PC-3 (cell line): ENCODE measurements at regions of chr10 and their contacts with region 1.

Region 1: GRCh38 chr10:109966961-109967738 is 40.6 kb upstream of the ADD3 start:
- DNase-seq: peak; percentile 56
- ATAC-seq: peak; percentile 72
- H3K4me3 ChIP-seq: peak overlapping the region; percentile 61
- H3K27ac ChIP-seq: peak overlapping the region; percentile 86
- H3K4me1 ChIP-seq: peaks cover 36% of the 10 kb centered on the region
- H3K27me3 ChIP-seq: no peaks in the 10 kb centered on the region
- CTCF ChIP-seq: no peak

Region 2: DNA sequence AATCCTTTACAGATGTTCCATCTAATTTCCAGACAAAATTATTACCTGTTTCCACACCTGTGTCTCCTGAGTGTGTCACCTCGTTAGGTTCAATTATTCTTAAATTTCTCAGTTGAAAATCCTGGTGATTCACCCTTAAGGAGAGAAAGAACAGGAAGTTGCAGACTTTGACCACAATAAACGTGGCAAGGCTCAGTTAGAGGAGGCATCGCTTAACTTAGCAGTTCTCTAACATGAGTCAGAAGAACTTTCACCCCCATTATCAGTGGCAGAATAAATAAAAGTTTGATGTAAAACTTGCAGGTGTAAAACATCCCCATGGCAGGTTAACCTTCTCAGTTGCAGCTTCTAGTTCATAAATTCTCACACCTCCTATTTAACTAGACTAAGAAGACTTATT is 52.2 kb before region 1 on chr10:
- CTCF ChIA-PET with region 1: no interaction called
- POLR2A ChIA-PET with region 1: no interaction called
- intact Hi-C with region 1: loop called (anchors 10 kb)
- DNase-seq: peak; percentile 86
- ATAC-seq: peak; percentile 88
- H3K4me3 ChIP-seq: 0 out of 2 replicates have a peak overlapping the region, but pooled peaks have one; percentile 22
- H3K27ac ChIP-seq: peak overlapping the region; percentile 60
- H3K4me1 ChIP-seq: peaks cover 52% of the 10 kb centered on the region
- H3K27me3 ChIP-seq: no peaks in the 10 kb centered on the region
- CTCF ChIP-seq: no peak

Region 3: GRCh38 chr10:110007701-110008517 is 40.8 kb after region 1 on chr10 and contains the start of gene ADD3:
- CTCF ChIA-PET with region 1: no interaction called
- POLR2A ChIA-PET with region 1: no interaction called
- intact Hi-C with region 1: loop called (anchors 5 kb)
- DNase-seq: peak; percentile 47
- ATAC-seq: peak; percentile 79
- H3K4me3 ChIP-seq: peak within 1 kb of the TSS; percentile 92
- H3K27ac ChIP-seq: no peak within 1 kb of the TSS
- H3K4me1 ChIP-seq: peaks cover 37% of the 10 kb centered on the region
- H3K27me3 ChIP-seq: no peaks in the 10 kb centered on the region
- CTCF ChIP-seq: no peak
- total RNA-seq, gene ADD3: 25.7 and 30.3 TPM in 2 replicates

Region 4: GRCh38 chr10:110260746-110261477 is 293.8 kb after region 1 on chr10:
- CTCF ChIA-PET with region 1: no interaction called
- POLR2A ChIA-PET with region 1: no interaction called
- intact Hi-C with region 1: no loop called
- DNase-seq: no peak
- ATAC-seq: no peak
- H3K4me3 ChIP-seq: no peak overlapping the region
- H3K27ac ChIP-seq: no peak overlapping the region
- H3K4me1 ChIP-seq: no peaks in the 10 kb centered on the region
- H3K27me3 ChIP-seq: no peaks in the 10 kb centered on the region
- CTCF ChIP-seq: no peak